ENCODE measurements at regions of chr17 and their contacts with region 1.

Region 1: DNA sequence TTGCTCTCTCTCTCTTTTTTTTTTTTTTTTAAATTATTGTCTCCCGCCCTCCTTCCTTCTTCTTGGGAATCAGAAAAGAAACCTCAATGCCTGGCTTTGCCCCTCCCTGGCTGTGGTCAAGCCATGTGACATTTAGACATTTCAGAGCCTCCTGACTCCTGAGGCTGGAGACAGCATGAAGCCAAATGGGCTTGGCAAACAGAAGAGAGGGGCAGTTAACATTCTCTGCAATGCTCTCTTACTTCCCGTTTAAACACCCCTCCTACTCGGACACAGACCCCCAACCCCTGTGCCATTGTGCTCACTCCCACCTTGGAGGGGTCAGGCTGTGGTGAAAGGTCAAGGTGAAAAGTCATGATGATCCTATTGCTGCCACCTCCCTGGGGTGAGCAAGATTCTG is 14.7 kb upstream of the MEOX1 start:
- DNase-seq: no peak
- H3K4me3 ChIP-seq: no peak overlapping the region
- H3K27ac ChIP-seq: no peak overlapping the region
- H3K4me1 ChIP-seq: no peaks in the 10 kb centered on the region
- H3K27me3 ChIP-seq: no peaks in the 10 kb centered on the region
- CTCF ChIP-seq: no peak
- POLR2A ChIP-seq: no peak

Region 2: DNA sequence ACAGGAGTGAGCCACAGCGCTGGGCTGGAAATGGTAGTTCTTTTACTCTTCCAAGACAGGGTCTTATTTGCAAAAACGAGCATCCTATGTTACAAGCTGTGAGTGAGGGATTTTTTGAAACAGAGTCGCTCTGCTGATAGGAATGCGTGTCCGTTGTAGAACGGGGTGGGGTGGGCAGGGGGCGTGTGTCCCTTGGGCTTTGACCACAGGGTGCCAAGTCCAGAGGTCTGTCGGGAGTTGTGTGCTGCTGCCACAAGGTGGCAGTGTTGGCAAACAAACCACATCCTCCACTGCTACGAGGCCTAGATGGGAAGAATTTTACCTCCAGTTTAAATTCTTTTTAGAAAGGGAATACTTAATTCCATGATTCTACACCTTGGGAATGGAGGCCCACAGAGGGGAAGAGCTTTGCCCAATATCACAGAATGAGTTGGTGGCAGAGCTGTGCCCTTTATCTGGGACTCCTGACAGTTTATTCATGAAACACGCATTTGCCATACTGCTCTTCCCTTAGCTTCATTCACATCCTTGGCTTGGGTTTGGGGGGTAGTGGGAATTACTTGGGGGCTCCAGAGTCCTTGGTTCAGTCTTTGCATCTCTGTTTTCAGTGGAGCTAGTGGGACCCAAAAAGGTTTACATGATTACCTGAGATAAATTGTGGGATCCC is 99.8 kb before region 1 on chr17:
- intact Hi-C with region 1: loop called (anchors 2 kb)
- DNase-seq: peak; percentile 69 to 74
- H3K4me3 ChIP-seq: no peak overlapping the region
- H3K27ac ChIP-seq: no peak overlapping the region
- H3K4me1 ChIP-seq: peaks cover 0 to 4% of the 10 kb centered on the region in 2 donors
- H3K27me3 ChIP-seq: no peaks in the 10 kb centered on the region
- CTCF ChIP-seq: peak; percentile 93 to 95 (median 94)
- POLR2A ChIP-seq: no peak

Region 3: GRCh38 chr17:43599835-43600234 is 76.6 kb before region 1 on chr17:
- intact Hi-C with region 1: no loop called
- DNase-seq: peak in 1 of 2 donors; percentile 40
- H3K4me3 ChIP-seq: no peak overlapping the region
- H3K27ac ChIP-seq: no peak overlapping the region
- H3K4me1 ChIP-seq: peaks cover 0 to 7% of the 10 kb centered on the region in 2 donors
- H3K27me3 ChIP-seq: no peaks in the 10 kb centered on the region
- CTCF ChIP-seq: no peak
- POLR2A ChIP-seq: no peak

Region 4: GRCh38 chr17:43766413-43767052 is 90.1 kb after region 1 on chr17:
- intact Hi-C with region 1: no loop called
- DNase-seq: peak; percentile 50 to 61
- H3K4me3 ChIP-seq: no peak overlapping the region
- H3K27ac ChIP-seq: no peak overlapping the region
- H3K4me1 ChIP-seq: no peaks in the 10 kb centered on the region
- H3K27me3 ChIP-seq: no peaks in the 10 kb centered on the region
- CTCF ChIP-seq: peak; percentile 60 to 83 (median 66)
- POLR2A ChIP-seq: no peak

Region 5: GRCh38 chr17:43800736-43801135 is 124.3 kb after region 1 on chr17:
- intact Hi-C with region 1: no loop called
- DNase-seq: no peak
- H3K4me3 ChIP-seq: no peak overlapping the region
- H3K27ac ChIP-seq: no peak overlapping the region
- H3K4me1 ChIP-seq: no peaks in the 10 kb centered on the region
- H3K27me3 ChIP-seq: no peaks in the 10 kb centered on the region
- CTCF ChIP-seq: no peak
- POLR2A ChIP-seq: no peak